Astrocyte of the cerebellum (primary cell): ENCODE measurements at regions of chr1 and their contacts with region 1.

Region 1: DNA sequence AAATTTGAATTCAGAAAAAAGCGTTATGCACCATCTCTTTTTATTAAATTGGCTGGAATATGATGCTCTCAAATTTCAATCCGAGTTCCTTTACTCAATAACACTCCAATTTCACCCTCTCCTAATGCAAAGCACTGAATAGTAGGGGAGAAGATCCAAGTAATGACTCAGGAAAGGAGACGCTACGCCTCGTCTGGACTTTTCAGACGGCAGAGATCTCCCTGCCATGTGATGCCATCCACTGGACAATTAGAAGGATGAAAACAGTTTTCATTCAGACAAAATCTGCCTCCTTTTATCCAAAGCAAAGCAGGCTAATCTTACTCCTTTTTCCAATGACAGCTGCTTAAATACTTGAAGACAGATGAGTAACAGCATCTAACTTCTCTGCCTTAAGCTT is 242.4 kb upstream of the GREM2 start:
- DNase-seq: no peak
- H3K4me3 ChIP-seq: no peak overlapping the region
- CTCF ChIP-seq: no peak

Region 2: GRCh38 chr1:240784776-240785175 is 69.6 kb before region 1 on chr1:
- in situ Hi-C with region 1: loop called (anchors 5 kb)
- DNase-seq: no peak
- H3K4me3 ChIP-seq: no peak overlapping the region
- CTCF ChIP-seq: no peak